Activated CD4-positive, alpha-beta T cell treated with anti-CD3 and anti-CD28 coated beads for 36 hours (primary cell): ENCODE measurements at regions of chr15 and their contacts with region 1.

Region 1: DNA sequence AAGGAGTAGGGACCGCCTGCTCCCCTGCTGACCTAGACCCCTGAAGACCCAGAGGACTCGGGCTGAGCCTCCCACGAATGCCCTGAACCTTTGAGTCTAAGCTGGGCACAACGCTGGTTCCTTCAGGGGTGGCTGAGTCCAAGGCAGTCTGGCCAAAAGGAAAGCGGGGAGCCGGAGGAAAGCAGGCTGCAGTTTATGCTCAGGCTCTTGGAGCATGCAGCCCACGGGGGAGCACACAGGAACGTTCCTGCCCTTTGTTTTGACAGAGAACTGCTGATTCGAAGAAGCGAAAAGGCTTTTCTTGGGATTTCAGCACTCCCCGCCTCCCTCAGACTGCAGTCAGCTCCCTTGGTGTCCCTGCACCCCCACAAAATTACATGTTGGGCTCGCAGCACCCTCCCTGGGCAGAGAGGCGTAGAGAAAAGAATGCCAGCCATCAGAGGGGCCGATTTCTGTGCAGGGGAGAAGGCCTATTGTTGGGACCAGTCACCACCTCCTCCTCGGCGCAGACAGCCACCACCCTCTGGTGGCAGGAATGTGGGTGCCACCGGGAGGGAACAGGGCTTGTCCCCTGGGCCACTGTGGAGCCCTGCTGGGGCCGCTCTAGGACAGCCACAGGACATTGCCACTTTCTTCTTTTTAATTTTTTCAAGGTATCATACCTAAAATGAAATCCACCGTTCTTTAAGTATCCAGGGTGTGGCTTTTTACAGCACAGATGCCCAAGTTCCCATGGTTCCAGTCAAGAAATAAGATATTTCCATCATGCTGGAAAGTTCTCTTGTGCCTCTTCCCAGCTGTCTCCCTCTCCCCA is 72.2 kb downstream of the SMAD6 start:
- DNase-seq: peak; percentile 71
- ATAC-seq: peak; percentile 69
- H3K4me3 Mint-ChIP-seq: no peak overlapping the region
- H3K27ac Mint-ChIP-seq: no peak overlapping the region
- H3K4me1 Mint-ChIP-seq: no peaks in the 10 kb centered on the region
- H3K27me3 Mint-ChIP-seq: no peaks in the 10 kb centered on the region

Region 2: GRCh38 chr15:66545249-66545648 is 229.0 kb before region 1 on chr15:
- CTCF ChIA-PET with region 1: no interaction called
- POLR2A ChIA-PET with region 1: no interaction called
- intact Hi-C with region 1: no loop called
- DNase-seq: no peak
- ATAC-seq: no peak
- H3K4me3 Mint-ChIP-seq: no peak overlapping the region
- H3K27ac Mint-ChIP-seq: no peak overlapping the region
- H3K4me1 Mint-ChIP-seq: no peaks in the 10 kb centered on the region
- H3K27me3 Mint-ChIP-seq: no peaks in the 10 kb centered on the region

Region 3: GRCh38 chr15:66603301-66604179 is 170.7 kb before region 1 on chr15:
- CTCF ChIA-PET with region 1: interaction called, 15 read pairs
- POLR2A ChIA-PET with region 1: no interaction called
- intact Hi-C with region 1: loop called (anchors 1 kb)
- DNase-seq: peak; percentile 82
- ATAC-seq: peak; percentile 86
- H3K4me3 Mint-ChIP-seq: no peak overlapping the region
- H3K27ac Mint-ChIP-seq: no peak overlapping the region
- H3K4me1 Mint-ChIP-seq: peaks cover under 1% of the 10 kb centered on the region
- H3K27me3 Mint-ChIP-seq: peaks cover 4% of the 10 kb centered on the region

Region 4: GRCh38 chr15:66619151-66619903 is 154.9 kb before region 1 on chr15:
- CTCF ChIA-PET with region 1: interaction called, 9 read pairs
- POLR2A ChIA-PET with region 1: no interaction called
- intact Hi-C with region 1: loop called (anchors 1 kb)
- DNase-seq: peak; percentile 70
- ATAC-seq: peak; percentile 65
- H3K4me3 Mint-ChIP-seq: no peak overlapping the region
- H3K27ac Mint-ChIP-seq: no peak overlapping the region
- H3K4me1 Mint-ChIP-seq: no peaks in the 10 kb centered on the region
- H3K27me3 Mint-ChIP-seq: peaks cover 27% of the 10 kb centered on the region

Region 5: GRCh38 chr15:66638377-66638776 is 135.8 kb before region 1 on chr15:
- CTCF ChIA-PET with region 1: no interaction called
- POLR2A ChIA-PET with region 1: no interaction called
- intact Hi-C with region 1: no loop called
- DNase-seq: peak; percentile 21
- ATAC-seq: peak; percentile 88
- H3K4me3 Mint-ChIP-seq: no peak overlapping the region
- H3K27ac Mint-ChIP-seq: no peak overlapping the region
- H3K4me1 Mint-ChIP-seq: peaks cover 8% of the 10 kb centered on the region
- H3K27me3 Mint-ChIP-seq: no peaks in the 10 kb centered on the region

Region 6: DNA sequence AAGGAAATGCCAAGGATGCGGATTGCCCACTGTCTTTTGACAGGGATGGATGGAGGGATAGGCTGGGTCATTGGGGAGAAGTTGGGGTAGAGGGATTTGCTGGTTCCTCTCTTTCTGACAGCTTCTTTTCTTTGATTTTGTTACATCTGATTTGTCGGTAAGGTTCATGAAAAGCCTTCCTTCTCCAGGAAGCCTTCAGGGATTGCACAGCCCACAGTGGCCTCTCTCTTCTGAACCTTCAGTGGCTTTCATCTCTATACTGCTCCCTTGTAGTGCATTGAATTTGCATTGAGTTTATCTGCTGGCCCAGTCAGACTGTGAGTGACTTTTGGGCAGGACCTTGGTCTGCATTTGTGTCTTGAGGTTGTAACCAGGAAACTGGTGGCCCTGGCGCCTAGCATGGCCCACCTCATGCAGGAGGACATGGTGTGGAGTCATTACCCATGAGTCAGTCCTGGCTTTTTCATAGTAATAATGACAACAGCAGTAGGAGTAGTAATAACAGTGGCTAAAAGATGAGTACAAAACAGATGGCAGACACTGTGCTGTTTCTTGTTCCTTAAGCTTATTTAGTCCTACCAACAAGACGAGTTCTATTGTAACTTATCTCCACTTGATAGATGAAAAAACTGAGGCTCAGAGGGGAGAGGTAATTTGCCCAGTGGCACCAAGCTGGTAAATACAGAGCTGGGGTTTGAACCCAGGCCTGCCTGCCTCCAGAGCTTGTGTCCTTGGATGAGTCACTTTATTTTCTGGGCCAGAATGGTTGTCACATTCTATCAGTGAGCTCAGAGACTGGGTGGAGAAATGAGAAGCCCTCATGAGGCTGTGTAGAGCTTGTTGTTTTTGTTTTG is 43.8 kb before region 1 on chr15:
- CTCF ChIA-PET with region 1: no interaction called
- POLR2A ChIA-PET with region 1: no interaction called
- intact Hi-C with region 1: no loop called
- DNase-seq: peak; percentile 18
- ATAC-seq: peak; percentile 81
- H3K4me3 Mint-ChIP-seq: no peak overlapping the region
- H3K27ac Mint-ChIP-seq: no peak overlapping the region
- H3K4me1 Mint-ChIP-seq: no peaks in the 10 kb centered on the region
- H3K27me3 Mint-ChIP-seq: peaks cover 3% of the 10 kb centered on the region

Region 7: GRCh38 chr15:66827039-66827697 is 53.0 kb after region 1 on chr15:
- CTCF ChIA-PET with region 1: no interaction called
- POLR2A ChIA-PET with region 1: no interaction called
- intact Hi-C with region 1: no loop called
- DNase-seq: no peak
- ATAC-seq: no peak
- H3K4me3 Mint-ChIP-seq: no peak overlapping the region
- H3K27ac Mint-ChIP-seq: no peak overlapping the region
- H3K4me1 Mint-ChIP-seq: no peaks in the 10 kb centered on the region
- H3K27me3 Mint-ChIP-seq: no peaks in the 10 kb centered on the region